ENCODE measurements at regions of chr6 and their contacts with region 1.

Region 1: DNA sequence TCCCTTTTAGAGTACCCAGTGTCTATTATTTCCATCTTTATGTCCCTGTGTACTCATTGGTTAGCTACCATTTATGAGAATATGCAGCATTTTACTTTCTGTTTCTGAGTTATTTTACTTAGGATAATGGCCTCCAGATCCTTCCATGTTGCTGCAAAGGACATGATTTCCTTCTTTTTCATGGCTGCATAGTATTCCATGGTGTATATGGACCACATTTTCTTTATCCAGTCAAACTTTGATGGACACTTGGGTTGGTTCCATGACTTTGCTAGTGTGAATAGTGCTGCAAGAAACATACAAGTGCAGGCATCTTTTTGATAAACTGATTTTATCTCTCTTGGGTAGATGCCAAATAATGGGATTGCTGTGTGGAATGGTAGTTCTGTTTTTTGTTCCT is 55.4 kb downstream of the ZBTB2 start:
- DNase-seq: no peak

Region 2: DNA sequence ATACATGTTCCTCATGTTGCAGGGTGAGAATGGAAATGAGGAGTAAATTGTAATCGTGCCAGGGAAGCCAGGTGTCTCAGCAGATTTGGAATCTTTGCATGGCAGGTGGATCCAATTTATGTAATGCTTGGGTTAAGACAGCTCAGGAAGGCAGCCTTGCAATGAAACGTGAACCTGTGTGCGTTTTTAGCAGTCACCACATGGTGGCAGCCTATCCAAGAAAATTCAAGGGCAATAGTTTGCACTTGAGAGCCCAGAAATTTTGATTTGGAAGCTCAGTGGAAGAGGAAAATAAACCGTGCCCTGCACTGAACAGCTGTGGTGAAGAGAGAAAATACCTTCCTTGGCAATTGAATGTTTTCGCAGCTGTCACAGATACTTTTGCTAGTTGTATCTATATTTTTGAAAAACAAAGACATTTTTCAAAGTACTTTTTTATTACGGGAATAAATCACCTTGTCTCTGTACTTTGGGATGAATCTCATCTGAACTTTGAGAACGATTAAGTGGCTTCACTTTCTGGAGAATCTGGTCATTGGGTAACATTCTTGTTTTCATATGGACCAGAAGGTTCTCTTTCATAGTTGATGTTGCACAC is 443.9 kb before region 1 on chr6:
- intact Hi-C with region 1: loop called (anchors 2 kb)
- DNase-seq: peak in 9 of 10 donors; percentile 43 to 95 (median 72)

Region 3: GRCh38 chr6:151413372-151414145 is 77.6 kb after region 1 on chr6:
- intact Hi-C with region 1: no loop called
- DNase-seq: no peak

Region 4: GRCh38 chr6:153272201-153272980 is 1936.5 kb after region 1 on chr6:
- intact Hi-C with region 1: no loop called
- DNase-seq: peak in 1 of 10 donors; percentile 9